ENCODE measurements at regions of chr4 and their contacts with region 1.

Region 1: GRCh38 chr4:38179690-38180377 is 219.6 kb downstream of the PTTG2 start:
- DNase-seq: peak; percentile 79
- H3K4me3 Mint-ChIP-seq: no peak overlapping the region
- H3K27ac Mint-ChIP-seq: peak overlapping the region; percentile 3
- H3K4me1 Mint-ChIP-seq: peaks cover 54% of the 10 kb centered on the region
- H3K27me3 Mint-ChIP-seq: peaks cover 5% of the 10 kb centered on the region

Region 2: GRCh38 chr4:38062088-38062893 is 117.5 kb before region 1 on chr4:
- CTCF ChIA-PET with region 1: interaction called, 42 read pairs
- DNase-seq: peak; percentile 80
- H3K4me3 Mint-ChIP-seq: peak overlapping the region; percentile 72
- H3K27ac Mint-ChIP-seq: peak overlapping the region; percentile 51
- H3K4me1 Mint-ChIP-seq: peaks cover 19% of the 10 kb centered on the region
- H3K27me3 Mint-ChIP-seq: no peaks in the 10 kb centered on the region

Region 3: GRCh38 chr4:38119668-38120385 is 60.0 kb before region 1 on chr4:
- CTCF ChIA-PET with region 1: no interaction called
- DNase-seq: no peak
- H3K4me3 Mint-ChIP-seq: no peak overlapping the region
- H3K27ac Mint-ChIP-seq: no peak overlapping the region
- H3K4me1 Mint-ChIP-seq: peaks cover 18% of the 10 kb centered on the region
- H3K27me3 Mint-ChIP-seq: no peaks in the 10 kb centered on the region

Region 4: DNA sequence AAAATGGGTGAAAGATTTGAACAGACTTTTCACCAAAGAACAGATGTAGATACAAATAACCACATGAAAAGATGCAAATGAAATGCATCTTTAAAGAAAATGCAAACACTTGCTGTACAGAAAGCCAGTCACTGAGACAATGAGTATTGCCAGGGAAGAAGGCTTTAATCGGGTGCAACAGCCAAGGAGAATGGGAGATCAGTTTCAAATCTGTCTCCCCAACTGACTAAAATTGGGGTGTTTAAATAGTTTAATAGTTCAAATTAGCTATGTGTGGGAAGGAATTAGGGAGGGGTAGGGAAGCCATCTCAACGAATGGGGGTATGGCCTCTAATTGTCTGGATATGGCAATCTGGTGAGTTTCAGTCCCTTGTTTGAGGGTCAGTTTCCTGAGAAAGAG is 75.7 kb after region 1 on chr4:
- CTCF ChIA-PET with region 1: no interaction called
- DNase-seq: no peak
- H3K4me3 Mint-ChIP-seq: no peak overlapping the region
- H3K27ac Mint-ChIP-seq: no peak overlapping the region
- H3K4me1 Mint-ChIP-seq: no peaks in the 10 kb centered on the region
- H3K27me3 Mint-ChIP-seq: peaks cover 8% of the 10 kb centered on the region

Region 5: DNA sequence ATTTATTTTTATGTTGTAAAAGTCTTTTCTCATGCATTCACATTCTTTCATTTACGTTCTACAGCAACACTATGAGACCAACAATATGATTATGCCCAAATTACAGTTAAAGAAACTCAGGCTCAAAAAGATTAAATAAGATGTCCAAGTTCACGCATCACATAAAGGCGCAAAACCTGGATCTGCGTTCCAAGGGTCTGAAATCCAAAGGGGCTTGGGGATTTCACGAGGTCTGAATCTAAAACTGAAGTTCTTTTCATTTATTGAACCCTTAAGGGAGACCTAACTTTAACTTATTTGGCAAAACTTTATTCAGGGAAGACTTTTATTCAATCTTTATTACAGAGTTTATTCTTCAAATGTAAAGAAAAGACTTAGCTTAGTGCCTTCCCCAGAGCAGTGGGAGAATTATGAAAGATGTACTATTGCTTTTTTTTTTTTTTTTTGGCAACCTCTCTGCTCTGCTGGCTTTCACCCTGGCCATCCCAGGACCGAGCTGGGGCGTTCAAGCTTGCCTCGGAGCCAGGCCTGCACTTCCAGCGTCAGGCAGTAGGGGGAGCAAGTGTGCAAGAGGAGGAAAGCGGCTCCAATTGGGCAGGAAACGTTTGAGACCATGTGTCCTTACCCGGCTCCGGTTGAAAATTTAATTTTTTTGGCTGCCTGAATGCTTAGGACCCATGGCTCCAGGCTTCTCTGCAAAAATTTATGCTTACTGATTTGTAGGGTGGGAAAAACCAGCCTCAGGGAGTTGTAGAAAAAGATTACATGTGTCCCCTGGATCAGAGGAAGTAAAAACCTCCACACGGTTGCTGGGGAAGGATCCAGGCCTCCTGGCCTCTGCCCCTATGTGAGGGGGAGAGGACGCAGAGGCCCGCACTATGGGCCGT is 139.9 kb after region 1 on chr4:
- CTCF ChIA-PET with region 1: interaction called, 25 read pairs
- DNase-seq: peak; percentile 95
- H3K4me3 Mint-ChIP-seq: peak overlapping the region; percentile 74
- H3K27ac Mint-ChIP-seq: peak overlapping the region; percentile 97
- H3K4me1 Mint-ChIP-seq: peaks cover 74% of the 10 kb centered on the region
- H3K27me3 Mint-ChIP-seq: peaks cover 4% of the 10 kb centered on the region

Region 6: DNA sequence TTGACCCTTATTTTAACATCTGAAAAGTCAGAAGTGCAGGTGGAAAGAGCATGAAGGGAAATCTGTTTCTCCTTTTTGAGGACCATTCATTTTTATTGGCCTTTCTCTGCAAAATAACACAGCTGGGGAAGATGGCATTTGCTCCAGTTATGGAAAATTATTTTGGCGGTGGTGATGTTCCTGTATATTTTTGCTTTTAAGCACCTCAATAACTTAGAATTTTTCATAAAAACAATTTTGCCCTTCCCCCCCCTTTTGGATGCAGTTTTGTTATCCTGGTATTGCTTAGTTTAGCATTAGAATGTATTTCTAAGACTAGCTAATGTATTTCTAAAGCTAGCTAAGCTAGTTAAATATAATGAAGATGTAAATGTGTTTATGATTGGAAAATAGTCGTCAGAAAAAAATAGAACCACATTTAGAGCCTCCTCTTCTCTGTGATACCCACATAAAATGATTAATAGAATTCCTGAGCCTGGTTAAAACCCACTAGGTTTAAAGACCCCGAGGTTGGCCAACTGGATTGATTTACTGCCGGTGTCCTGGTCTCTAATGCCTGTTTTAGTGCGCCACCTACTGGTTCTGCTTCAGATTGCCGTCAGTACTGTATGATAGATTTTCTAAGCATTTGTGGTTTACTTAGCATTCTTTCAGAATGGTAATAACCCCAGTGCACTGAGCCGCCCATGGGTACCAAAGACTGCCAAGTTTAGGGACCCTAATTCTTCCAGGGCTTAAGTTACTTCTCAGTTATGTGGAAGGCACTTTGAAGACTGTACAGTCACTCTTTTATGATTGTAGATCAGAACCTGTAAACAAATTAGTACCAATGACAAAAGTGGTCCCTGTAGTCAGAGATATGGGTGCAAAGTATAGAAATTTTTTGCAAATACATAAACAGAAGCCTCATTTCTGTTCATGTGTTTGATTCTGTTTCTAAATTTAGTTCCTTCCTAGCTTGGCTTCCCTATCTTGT is 495.6 kb after region 1 on chr4:
- CTCF ChIA-PET with region 1: interaction called, 141 read pairs
- DNase-seq: peak; percentile 91
- H3K4me3 Mint-ChIP-seq: peak overlapping the region; percentile 50
- H3K27ac Mint-ChIP-seq: peak overlapping the region; percentile 53
- H3K4me1 Mint-ChIP-seq: peaks cover 83% of the 10 kb centered on the region
- H3K27me3 Mint-ChIP-seq: no peaks in the 10 kb centered on the region

Region 7: DNA sequence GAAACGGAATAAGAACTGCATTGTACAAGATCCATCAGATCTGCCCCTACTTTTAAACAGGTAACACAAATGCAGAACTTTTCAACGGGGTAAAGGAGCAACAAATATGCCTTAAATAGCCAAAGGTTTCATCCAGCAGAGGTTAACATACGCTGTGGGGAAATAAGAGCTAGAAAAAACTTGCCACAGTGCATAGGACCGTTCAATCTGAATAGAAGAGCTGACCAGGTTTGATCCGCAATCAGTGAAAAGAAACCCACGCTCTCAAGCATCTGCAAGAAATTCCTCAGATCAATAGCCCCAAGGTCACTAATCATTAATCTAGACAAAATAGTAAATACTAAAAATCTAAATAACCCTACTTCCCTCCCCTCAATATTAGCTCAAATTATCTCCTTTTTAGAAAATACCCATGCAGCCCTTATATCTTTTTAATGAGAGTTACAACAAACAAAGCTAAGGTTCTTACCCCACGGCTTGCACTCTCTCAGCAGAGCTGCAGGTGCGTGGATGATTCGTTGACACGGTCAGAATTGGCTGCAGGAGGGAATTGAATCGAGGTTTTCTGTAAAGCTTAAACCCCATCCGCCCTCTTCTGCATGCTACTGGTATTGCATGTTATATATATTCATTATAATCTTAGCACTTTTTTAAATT is 602.7 kb after region 1 on chr4 and contains the start of gene TLR10:
- CTCF ChIA-PET with region 1: interaction called, 11 read pairs
- DNase-seq: peak; percentile 49
- H3K4me3 Mint-ChIP-seq: no peak within 1 kb of the TSS
- H3K27ac Mint-ChIP-seq: no peak within 1 kb of the TSS
- H3K4me1 Mint-ChIP-seq: peaks cover 8% of the 10 kb centered on the region
- H3K27me3 Mint-ChIP-seq: no peaks in the 10 kb centered on the region

Measured in activated naive CD4-positive, alpha-beta T cell treated with anti-CD3 and anti-CD28 coated beads, Interleukin-2, amount 10 ng/mL, durations not matched to agents 7 days and 5 days (primary cell).